Esophagus muscularis mucosa (tissue), 4 donors: ENCODE measurements at regions of chr17 and their contacts with region 1.

Region 1: GRCh38 chr17:30344283-30345088 is 10.6 kb upstream of the TMIGD1 start:
- DNase-seq: peak; percentile 92
- H3K4me3 ChIP-seq: no peak overlapping the region
- H3K27ac ChIP-seq: peak overlapping the region; percentile 27 to 70 (median 56)
- H3K4me1 ChIP-seq: peaks cover 31 to 54% (median 44%) of the 10 kb centered on the region in 4 donors
- H3K27me3 ChIP-seq: no peaks in the 10 kb centered on the region
- CTCF ChIP-seq: no peak
- EP300 ChIP-seq: no peak
- POLR2A ChIP-seq: no peak

Region 2: DNA sequence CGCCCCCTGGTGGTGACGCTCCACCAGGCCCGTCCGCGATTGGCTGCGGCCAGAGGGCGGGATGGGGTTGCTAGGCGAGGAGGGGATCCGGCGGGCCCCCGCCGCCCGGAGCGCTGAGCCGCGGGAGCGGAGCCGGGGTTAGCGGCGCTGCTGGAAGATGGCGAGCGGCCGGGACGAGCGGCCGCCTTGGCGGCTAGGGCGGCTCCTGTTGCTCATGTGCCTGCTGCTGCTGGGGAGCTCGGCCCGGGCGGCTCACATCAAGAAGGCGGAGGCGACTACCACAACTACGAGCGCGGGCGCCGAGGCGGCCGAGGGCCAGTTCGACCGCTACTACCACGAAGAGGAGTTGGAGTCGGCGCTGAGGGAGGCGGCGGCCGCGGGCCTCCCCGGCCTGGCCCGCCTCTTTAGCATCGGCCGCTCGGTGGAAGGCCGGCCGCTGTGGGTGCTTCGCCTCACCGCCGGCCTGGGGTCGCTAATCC is 34.4 kb after region 1 on chr17 and contains the start of gene CPD:
- intact Hi-C with region 1: loop called (anchors 5 kb)
- DNase-seq: peak; percentile 99
- H3K4me3 ChIP-seq: peak within 1 kb of the TSS; percentile 82 to 98 (median 93)
- H3K27ac ChIP-seq: peak within 1 kb of the TSS; percentile 96 to 98 (median 97)
- H3K4me1 ChIP-seq: peaks cover 8 to 62% (median 53%) of the 10 kb centered on the region in 4 donors
- H3K27me3 ChIP-seq: no peaks in the 10 kb centered on the region
- CTCF ChIP-seq: peak in 1 of 3 experiments; percentile 18
- EP300 ChIP-seq: no peak
- POLR2A ChIP-seq: peak; percentile 92
- total RNA-seq, gene CPD: 67.0 to 141 (median 95.1) TPM

Region 3: DNA sequence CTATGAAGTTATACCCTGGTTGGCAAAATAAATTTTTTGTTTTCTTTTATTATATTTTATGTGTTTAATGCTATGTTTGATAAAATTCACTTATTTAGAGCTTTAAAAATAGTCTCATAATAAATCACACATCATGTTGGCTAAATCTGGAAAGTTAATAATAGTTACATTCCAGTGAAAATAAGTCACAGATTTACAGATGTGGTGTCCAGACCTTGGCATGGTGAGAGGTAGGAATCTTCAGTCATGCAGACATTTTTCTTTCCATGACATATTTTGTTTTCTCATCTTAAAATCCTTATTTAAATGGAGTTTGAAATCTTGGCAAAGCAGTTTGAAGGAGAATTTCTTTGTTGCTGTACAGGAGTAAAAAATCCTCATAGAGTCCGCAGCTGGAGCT is 84.7 kb after region 1 on chr17:
- intact Hi-C with region 1: loop called (anchors 10 kb)
- DNase-seq: no peak
- H3K4me3 ChIP-seq: no peak overlapping the region
- H3K27ac ChIP-seq: peak overlapping the region; percentile 66 to 72 (median 70)
- H3K4me1 ChIP-seq: peaks cover 0 to 31% (median 20%) of the 10 kb centered on the region in 4 donors
- H3K27me3 ChIP-seq: no peaks in the 10 kb centered on the region
- CTCF ChIP-seq: no peak
- EP300 ChIP-seq: no peak
- POLR2A ChIP-seq: no peak

Region 4: DNA sequence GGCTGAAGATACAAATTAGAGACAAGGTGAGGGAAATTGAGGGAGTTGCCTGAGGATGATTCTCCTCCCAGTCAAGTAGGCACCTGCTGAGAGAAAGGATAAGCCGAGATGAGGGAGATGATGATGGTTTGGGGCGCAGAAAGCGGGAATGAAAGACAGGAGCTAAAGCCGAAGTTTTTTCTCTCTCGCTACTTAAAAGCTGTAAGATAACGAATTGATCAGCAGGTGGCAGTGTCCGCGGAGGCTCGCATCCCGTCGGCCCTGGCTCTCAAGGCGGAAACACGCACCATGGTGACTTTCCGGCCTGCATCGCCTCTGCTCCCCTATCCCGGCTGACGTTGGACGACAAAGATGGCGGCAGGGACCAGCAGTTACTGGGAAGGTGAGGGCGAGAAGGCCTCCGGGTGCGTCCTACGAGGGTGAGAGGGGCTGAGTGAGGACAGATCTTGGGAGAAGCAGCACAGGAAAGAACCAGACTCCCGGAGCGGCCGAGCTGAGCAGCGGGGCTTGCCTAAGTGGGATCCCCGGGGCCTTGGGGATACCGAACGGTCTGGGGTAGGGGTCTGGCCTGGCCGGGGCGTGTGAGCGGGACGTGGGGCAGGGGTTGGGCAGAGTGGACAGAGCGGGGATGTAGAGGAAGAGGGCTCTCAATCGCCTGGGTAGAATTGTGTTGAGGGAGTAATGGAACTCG is 132.7 kb after region 1 on chr17 and contains the start of gene GOSR1:
- intact Hi-C with region 1: loop called (anchors 10 kb)
- DNase-seq: peak; percentile 98
- H3K4me3 ChIP-seq: peak within 1 kb of the TSS; percentile 90 to 97 (median 94)
- H3K27ac ChIP-seq: peak within 1 kb of the TSS; percentile 92 to 96 (median 96)
- H3K4me1 ChIP-seq: peaks cover 21 to 45% (median 36%) of the 10 kb centered on the region in 4 donors
- H3K27me3 ChIP-seq: no peaks in the 10 kb centered on the region
- CTCF ChIP-seq: peak; percentile 82 to 87 (median 83)
- EP300 ChIP-seq: no peak
- POLR2A ChIP-seq: no peak
- total RNA-seq, gene GOSR1: 28.3 to 49.5 (median 34.2) TPM